Activated B cell treated with CpG ODN at 0.5 μM for 24 hours (primary cell): ENCODE measurements at regions of chr12 and their contacts with region 1.

Region 1: DNA sequence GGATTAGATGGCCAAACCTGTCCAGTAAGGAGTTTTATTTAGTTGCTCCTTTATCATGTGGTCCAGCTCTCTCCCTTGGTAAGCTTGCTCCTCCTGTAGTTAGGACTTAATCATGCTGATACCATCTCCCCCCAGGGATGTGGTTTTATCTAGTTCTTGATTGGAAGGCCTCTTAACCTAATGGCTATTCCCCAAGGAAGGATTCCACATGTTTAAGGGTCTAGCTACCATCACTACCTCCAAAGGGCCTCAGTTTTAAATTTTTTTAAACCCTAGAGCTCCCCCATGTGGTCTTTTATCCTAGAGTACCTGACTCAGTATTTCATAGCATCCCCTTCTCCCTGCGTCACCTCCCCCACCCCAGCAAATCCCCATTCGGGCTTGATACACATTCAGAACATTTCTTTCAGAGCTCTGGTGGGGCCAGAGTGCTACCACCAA is 22.5 kb downstream of the MAP3K12 start:
- DNase-seq: no peak
- ATAC-seq: peak; percentile 34
- H3K4me3 Mint-ChIP-seq: no peak overlapping the region
- H3K27ac Mint-ChIP-seq: no peak overlapping the region
- H3K4me1 Mint-ChIP-seq: peaks cover 2% of the 10 kb centered on the region
- H3K27me3 Mint-ChIP-seq: no peaks in the 10 kb centered on the region
- CTCF ChIP-seq: no peak

Region 2: DNA sequence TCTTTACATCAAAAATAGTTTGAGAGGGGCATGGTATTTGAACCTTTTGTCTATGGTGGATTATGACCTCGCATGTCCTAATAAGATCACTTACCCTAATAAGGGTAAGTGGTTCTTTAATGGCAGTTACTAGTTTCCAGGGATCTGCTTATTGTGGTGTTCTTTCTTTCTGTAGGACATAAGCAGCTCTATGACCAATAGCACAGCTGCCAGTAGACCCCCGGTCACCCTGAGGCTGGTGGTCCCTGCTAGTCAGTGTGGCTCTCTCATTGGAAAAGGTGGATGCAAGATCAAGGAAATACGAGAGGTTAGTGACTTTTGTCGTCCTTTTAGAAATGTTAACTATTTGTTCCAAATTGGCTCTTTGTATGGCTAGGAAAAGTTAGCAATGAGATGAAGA is 17.7 kb before region 1 on chr12:
- CTCF ChIA-PET with region 1: interaction called, 5 read pairs
- POLR2A ChIA-PET with region 1: interaction called, 9 read pairs
- intact Hi-C with region 1: loop called (anchors 2 kb)
- DNase-seq: no peak
- ATAC-seq: no peak
- H3K4me3 Mint-ChIP-seq: no peak overlapping the region
- H3K27ac Mint-ChIP-seq: no peak overlapping the region
- H3K4me1 Mint-ChIP-seq: peaks cover 15% of the 10 kb centered on the region
- H3K27me3 Mint-ChIP-seq: no peaks in the 10 kb centered on the region
- CTCF ChIP-seq: no peak